ENCODE measurements at regions of chr10 and their contacts with region 1.

Region 1: DNA sequence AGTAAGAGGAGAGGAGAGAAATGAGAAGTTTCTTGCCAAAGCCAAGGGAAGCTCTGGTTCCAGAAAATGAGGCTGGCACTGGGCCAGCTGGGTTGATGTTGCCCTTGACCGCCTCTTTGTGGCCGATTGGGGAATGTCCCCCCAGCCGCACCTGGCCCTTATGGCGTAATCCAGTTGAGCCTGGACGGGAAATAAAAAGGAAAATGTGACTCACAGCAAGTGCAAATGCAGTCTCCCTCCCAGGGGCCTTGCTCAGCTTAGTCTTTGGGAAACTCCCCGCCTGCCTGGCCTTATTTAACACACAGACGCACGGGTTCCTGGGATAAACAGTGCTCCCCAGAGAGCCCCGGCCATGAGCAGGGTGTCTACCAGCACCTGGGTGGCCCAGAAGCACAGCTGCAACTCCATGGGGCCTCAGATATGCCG is 174.8 kb downstream of the KIAA1217 start:
- DNase-seq: peak; percentile 82 to 95
- H3K4me3 ChIP-seq: no peak overlapping the region
- H3K27ac ChIP-seq: peak overlapping the region; percentile 46 to 65
- H3K4me1 ChIP-seq: peaks cover 2 to 11% of the 10 kb centered on the region in 2 donors
- H3K27me3 ChIP-seq: no peaks in the 10 kb centered on the region
- CTCF ChIP-seq: peak; percentile 46 to 55 (median 53)

Region 2: DNA sequence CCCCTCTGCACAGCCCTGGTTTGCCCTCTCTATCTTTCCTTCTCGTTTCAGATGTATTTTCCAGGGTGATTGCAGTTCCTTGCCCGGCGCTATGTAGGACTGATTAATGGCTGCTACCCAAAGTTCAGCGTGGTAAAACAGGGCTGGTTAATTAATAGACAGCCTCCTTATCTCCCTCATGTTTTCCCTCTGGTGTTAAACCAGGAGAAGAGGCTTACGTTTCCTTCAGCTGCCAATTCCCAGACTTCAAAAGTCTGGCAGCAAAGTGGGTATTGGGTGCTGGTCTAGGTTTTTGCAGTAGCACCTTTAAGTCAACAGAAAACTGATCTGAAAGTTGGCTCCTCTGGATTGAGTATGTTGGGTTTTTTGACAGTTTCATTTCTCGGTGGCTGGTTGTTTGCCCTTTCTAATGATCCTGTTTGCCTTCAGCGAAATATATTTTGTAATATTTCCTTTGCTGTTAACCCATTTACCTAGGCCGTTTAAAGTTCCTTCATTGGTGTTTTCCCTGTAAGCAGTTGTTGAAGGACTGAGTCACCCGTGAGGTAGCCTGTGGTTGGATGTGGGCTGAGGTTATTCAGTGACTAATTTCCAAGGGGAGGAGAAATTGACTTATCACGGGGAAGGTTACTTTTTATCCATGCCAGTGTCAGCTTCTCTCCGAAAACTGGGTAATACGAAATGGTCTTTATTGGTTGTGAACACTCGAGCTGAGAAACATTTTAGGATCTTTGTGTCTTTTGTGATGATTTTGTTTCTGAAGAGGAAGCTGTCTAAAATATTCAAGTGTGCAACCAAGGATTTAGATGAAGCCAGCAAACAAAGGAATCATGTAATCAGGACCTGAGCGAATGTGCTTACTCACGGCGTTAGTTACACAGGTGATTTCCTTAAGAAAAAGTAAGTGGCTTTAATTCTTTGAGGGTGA is 82.5 kb after region 1 on chr10:
- intact Hi-C with region 1: loop called (anchors 5 kb)
- DNase-seq: no peak
- H3K4me3 ChIP-seq: peak overlapping the region; percentile 1 to 29
- H3K27ac ChIP-seq: peak overlapping the region; percentile 47 to 62
- H3K4me1 ChIP-seq: peaks cover 4 to 19% of the 10 kb centered on the region in 2 donors
- H3K27me3 ChIP-seq: no peaks in the 10 kb centered on the region
- CTCF ChIP-seq: no peak

Region 3: GRCh38 chr10:24502801-24503460 is 119.2 kb after region 1 on chr10:
- intact Hi-C with region 1: no loop called
- DNase-seq: no peak
- H3K4me3 ChIP-seq: no peak overlapping the region
- H3K27ac ChIP-seq: no peak overlapping the region
- H3K4me1 ChIP-seq: no peaks in the 10 kb centered on the region
- H3K27me3 ChIP-seq: no peaks in the 10 kb centered on the region
- CTCF ChIP-seq: no peak